Motor neuron (in vitro differentiated cells): ENCODE measurements at regions of chr16 and their contacts with region 1.

Region 1: GRCh38 chr16:22007509-22008214 is at the start of gene MOSMO:
- ATAC-seq: peak; percentile 86 to 96 (median 90)
- H3K4me3 ChIP-seq: peak within 1 kb of the TSS; percentile 66 to 97 (median 95)
- H3K27ac ChIP-seq: peak within 1 kb of the TSS; percentile 88 to 93
- H3K4me1 ChIP-seq: peaks cover 24% of the 10 kb centered on the region in 2 donors
- total RNA-seq, gene MOSMO: 13.4 to 25.4 (median 17.2) TPM

Region 2: GRCh38 chr16:22077700-22078313 is 70.1 kb after region 1 on chr16:
- in situ Hi-C with region 1: loop called in 1 of 9 experiments (anchors 10 kb)
- ATAC-seq: peak in 5 of 8 experiments; percentile 25 to 90 (median 66)
- H3K4me3 ChIP-seq: no peak overlapping the region
- H3K27ac ChIP-seq: no peak overlapping the region
- H3K4me1 ChIP-seq: no peaks in the 10 kb centered on the region

Region 3: GRCh38 chr16:22098405-22099255 is 91.0 kb after region 1 on chr16:
- in situ Hi-C with region 1: loop called in 2 of 9 experiments (anchors 10 kb)
- ATAC-seq: peak; percentile 70 to 96 (median 80)
- H3K4me3 ChIP-seq: no peak overlapping the region
- H3K27ac ChIP-seq: no peak overlapping the region
- H3K4me1 ChIP-seq: peaks cover 0 to 8% of the 10 kb centered on the region in 2 donors

Region 4: DNA sequence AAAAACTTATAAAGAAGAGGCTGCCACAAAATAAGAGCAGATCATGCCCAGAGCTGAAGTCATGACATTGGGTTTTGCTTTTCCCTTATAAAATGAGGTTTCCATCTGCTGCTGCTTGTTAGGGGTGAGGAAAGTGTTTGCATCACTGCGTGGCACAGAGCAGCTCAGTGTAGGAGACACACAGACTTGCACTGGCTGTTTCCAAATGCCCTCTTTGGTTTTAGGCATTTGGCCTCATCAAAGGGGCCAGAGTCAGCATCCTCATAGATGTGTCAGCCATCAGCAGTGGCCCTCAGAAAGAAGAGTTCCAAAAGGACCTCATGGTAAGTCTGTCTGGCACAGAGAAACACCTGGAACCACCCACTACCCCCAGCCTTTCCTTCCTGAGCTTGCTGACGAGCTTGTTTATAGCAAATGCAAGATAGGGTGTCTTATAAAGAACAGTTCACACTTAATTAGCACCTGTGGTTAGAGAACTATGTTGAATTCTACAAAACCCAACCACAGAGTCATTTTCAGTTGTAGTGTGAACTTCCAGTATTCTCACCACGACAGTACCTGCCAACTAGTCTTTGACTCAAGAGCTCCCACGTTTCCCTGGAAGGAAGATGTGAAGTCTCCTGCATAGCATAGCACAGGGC is 101.7 kb after region 1 on chr16:
- in situ Hi-C with region 1: loop called in 1 of 9 experiments (anchors 10 kb)
- ATAC-seq: no peak
- H3K4me3 ChIP-seq: no peak overlapping the region
- H3K27ac ChIP-seq: no peak overlapping the region
- H3K4me1 ChIP-seq: no peaks in the 10 kb centered on the region

Region 5: DNA sequence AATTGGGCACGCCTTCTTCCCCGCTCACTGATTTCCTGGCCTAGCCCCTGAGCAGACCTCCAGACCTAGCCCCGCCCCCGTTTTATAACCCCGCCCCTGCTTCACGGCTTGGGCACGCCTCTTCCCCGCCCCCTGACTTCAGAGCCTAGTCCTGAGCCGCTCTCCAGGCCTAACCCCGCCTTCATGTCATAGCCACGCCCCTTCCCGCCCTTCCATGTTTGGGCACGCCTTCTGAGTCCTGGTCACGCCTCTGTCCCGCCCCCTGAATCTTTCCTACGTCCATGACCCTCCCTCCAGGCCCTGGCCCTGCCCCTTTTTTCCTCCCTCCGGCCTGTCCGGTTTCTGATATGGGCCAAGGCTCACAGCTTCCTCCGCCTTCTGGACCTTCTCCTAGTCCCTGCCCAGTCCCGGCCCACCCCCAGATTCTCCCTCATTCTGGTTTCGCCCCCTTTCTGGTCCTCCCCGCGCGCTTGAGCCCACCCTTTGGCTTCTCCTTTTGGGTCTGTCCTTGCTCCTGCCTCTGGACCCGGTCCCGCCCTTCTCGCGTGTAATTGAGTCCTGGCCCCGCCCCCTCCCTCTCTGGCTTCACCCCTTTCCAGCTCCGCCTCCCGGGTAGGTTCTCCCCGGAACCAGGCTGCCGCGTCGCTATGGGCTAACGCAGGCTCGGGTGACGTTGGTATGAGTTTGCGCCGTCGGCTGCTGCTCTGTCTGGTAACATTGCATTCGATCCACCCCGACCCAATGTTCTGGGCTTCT is 183.3 kb after region 1 on chr16:
- in situ Hi-C with region 1: loop called in 3 of 9 experiments (anchors 5 to 25 kb)
- ATAC-seq: peak; percentile 54 to 74 (median 72)
- H3K4me3 ChIP-seq: peak overlapping the region; percentile 49 to 80 (median 54)
- H3K27ac ChIP-seq: peak overlapping the region; percentile 94 to 95
- H3K4me1 ChIP-seq: peaks cover 10 to 20% of the 10 kb centered on the region in 2 donors

Region 6: GRCh38 chr16:22297114-22297878 is 289.6 kb after region 1 on chr16 and contains the start of gene POLR3E:
- in situ Hi-C with region 1: loop called in 1 of 9 experiments (anchors 10 kb)
- ATAC-seq: peak; percentile 71 to 86 (median 82)
- H3K4me3 ChIP-seq: peak within 1 kb of the TSS; percentile 54 to 86 (median 68)
- H3K27ac ChIP-seq: peak within 1 kb of the TSS; percentile 91 to 97
- H3K4me1 ChIP-seq: peaks cover 8 to 9% of the 10 kb centered on the region in 2 donors
- total RNA-seq, gene POLR3E: 20.0 to 65.8 (median 39.4) TPM